ENCODE measurements at regions of chr17 and their contacts with region 1.

Region 1: DNA sequence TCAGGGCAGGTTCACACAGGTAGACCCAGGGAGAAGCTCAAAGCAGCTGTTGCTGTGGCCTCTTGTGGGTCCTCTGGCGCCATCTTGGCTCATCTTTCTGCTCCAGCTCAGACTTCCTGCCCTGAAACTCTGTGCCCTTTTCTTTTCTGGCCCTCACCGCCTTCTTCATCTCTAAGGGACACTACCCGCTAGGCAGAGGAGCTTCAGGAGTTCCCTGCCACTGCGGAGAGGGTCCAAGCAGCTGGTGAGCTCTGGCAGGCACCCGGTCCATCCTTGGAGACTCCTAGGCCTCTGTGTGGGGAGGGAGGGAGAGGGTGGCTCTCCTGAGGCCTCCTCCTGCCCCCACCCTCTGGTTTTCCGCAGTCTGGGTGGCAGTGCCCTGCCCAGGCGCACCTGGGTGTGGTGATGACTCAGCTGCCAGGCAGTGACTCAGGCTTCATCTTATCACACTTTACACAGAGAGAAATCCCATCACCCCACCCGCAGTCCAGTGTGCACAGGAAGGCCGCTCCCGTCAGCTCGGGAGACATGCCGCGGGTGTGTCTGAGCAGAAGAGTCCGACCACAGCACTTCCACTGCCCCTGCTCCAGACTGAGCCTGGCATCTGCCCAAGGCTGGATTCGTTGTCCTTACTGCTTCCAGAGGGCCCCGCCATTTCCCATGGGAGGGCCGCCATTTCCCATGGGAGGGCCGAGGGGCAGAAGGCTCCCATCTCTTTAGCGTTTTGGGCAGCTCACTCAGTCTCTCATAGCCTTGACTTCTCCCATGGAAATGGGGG is 7.3 kb downstream of the NT5C start:
- DNase-seq: peak; percentile 100
- ATAC-seq: peak; percentile 96
- H3K4me3 ChIP-seq: peak overlapping the region; percentile 2; the same call in 1 of the 2 replicates
- H3K27ac ChIP-seq: peak overlapping the region; percentile 94
- H3K4me1 ChIP-seq: peaks cover 24% of the 10 kb centered on the region
- H3K27me3 ChIP-seq: no peaks in the 10 kb centered on the region
- CTCF ChIP-seq: peak; percentile 40

Region 2: DNA sequence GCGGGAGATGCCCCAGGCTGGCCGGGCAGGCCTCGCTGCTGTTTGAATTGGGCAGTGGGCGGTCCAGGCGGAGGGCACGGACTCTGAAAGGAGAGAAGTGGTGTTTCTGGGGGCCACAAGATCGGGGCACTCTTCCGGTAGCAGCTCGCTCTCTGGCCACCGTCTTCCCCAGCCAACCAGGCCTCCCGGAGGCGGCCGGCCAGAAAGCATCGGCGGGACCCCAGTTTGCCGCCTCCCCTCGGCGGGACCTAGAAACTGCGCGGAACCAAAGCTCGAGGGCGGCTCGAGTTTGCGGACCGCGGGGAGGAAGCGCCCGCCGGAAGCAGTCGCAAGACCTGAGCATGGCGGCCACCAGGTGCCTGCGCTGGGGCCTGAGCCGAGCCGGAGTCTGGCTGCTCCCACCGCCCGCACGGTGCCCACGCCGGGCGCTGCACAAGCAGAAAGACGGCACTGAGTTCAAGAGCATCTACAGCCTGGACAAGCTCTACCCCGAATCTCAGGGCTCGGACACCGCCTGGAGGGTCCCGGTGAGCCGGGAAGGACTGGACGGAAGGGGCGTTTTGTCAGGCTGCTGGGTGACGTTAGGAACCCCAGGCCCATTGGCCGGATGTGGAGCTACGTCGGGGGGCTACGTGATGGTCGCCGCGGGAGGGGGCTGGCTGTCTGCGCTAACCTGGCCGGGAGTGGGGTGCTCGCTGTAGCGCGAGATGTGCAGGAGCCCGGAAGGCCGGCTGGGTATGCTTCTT is 111.7 kb before region 1 on chr17 and contains the start of gene MRPL58:
- CTCF ChIA-PET with region 1: interaction called, 15 read pairs
- POLR2A ChIA-PET with region 1: no interaction called
- intact Hi-C with region 1: no loop called
- DNase-seq: peak; percentile 91
- ATAC-seq: peak; percentile 83
- H3K4me3 ChIP-seq: peak within 1 kb of the TSS; percentile 87
- H3K27ac ChIP-seq: peak within 1 kb of the TSS; percentile 68
- H3K4me1 ChIP-seq: peaks cover 30% of the 10 kb centered on the region
- H3K27me3 ChIP-seq: no peaks in the 10 kb centered on the region
- CTCF ChIP-seq: peak; percentile 38; the same call in 1 of the 2 replicates
- total RNA-seq, gene MRPL58: 151 and 195 TPM in 2 replicates

Region 3: DNA sequence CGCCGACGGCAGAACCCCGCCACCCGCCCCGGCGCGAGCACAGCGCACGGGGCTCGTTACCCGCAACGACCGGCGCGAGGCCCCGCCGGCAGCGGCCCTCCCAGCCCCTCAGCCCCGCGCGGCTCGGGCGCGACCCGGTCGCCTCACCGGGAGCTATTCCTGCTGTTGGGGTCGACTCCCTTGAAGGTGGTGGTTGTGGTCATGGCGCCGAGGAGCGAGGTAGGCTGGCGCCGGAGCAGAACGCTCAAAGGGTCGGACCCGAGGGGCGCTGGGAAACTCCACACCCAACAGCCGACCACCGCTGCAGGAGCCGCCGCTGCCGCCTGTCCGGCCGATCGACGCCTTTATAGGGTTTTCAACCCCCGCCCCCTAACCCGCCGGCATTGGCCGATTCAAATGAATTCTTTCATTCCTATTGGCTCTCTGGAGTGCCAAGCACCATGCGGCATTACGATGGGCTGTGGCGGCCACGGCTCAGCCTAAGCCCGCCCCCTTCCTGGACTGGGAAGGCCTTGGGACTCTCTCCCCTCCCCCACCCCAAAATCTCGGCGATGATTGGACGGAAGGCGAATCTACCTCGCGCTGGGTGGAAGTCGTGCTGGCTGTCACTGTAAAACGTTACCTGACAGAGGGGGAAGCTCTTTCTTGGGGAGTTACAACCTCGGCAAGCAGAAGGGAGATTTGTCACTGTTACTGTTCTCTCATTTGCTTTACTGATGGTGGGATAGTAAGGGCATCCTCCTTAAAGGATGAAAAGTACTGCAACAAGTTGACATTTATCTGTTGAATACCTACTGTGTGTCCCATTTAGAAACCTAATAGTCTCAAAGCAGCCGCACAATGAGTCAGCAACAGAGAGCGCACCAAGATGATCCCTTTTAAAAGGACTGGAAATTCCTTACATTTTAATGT is 30.2 kb after region 1 on chr17 and contains the start of gene JPT1:
- CTCF ChIA-PET with region 1: no interaction called
- POLR2A ChIA-PET with region 1: interaction called, 4 read pairs
- intact Hi-C with region 1: loop called (anchors 2 kb)
- DNase-seq: peak; percentile 100
- ATAC-seq: peak; percentile 83
- H3K4me3 ChIP-seq: peak within 1 kb of the TSS; percentile 82
- H3K27ac ChIP-seq: peak within 1 kb of the TSS; percentile 63
- H3K4me1 ChIP-seq: peaks cover 47% of the 10 kb centered on the region
- H3K27me3 ChIP-seq: no peaks in the 10 kb centered on the region
- CTCF ChIP-seq: no peak
- total RNA-seq, gene JPT1: 674 and 705 TPM in 2 replicates

Measured in PC-3 (cell line).